ENCODE measurements at regions of chr3 and their contacts with region 1.

Region 1: GRCh38 chr3:49802719-49803464 is at the start of gene INKA1:
- DNase-seq: peak; percentile 87
- H3K4me3 ChIP-seq: peak within 1 kb of the TSS; percentile 68 to 86 (median 76)
- H3K27ac ChIP-seq: peak within 1 kb of the TSS; percentile 56
- H3K4me1 ChIP-seq: peaks cover 39% of the 10 kb centered on the region
- H3K27me3 ChIP-seq: no peaks in the 10 kb centered on the region
- CTCF ChIP-seq: peak; percentile 86 to 95
- POLR2A ChIP-seq: peak; percentile 51
- total RNA-seq, gene INKA1: 24.0 and 26.5 TPM in 2 replicates

Region 2: DNA sequence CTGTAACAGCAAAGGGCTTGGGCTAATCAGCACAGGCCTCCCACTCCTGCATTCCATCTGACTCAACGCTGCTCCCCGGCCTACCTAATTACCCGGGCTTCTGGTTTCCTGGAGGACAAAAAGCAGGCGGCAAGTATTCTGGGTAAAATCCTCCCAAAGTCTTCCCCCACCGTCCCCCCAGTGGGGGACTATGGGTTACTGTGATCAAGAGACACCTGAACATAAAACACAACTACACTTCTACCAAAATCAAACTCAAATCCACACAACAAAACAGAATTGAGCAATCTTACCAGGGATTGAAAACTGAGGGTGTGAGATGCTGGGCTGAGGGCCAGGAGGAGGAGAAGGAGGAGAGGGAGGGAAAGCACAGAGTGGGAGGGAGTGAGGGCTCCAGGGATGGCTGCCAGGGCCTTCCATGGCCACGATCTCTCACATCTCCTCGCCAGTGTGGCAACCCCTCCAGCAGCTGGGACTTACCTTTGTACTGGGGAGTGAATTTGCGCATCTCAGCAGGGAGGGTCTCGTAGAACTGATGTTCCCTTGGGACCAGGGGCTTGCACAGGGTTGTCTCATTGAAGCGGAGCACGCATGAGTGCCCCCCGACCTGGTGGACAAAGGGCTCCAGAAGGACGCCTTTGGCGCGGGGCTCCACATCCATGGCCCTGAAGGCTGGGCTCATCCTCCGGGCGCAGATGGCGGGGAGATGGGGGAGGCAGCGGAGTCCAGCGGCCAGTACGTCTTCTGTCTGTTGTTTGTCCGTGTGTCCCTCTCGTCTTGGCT is 1108.1 kb before region 1 on chr3:
- CTCF ChIA-PET with region 1: no interaction called
- POLR2A ChIA-PET with region 1: no interaction called
- dilution Hi-C with region 1: no loop called
- intact Hi-C with region 1: no loop called
- DNase-seq: peak; percentile 60
- H3K4me3 ChIP-seq: peak overlapping the region in 1 of 3 experiments; percentile 17
- H3K27ac ChIP-seq: peak overlapping the region; percentile 85
- H3K4me1 ChIP-seq: peaks cover 21% of the 10 kb centered on the region
- H3K27me3 ChIP-seq: no peaks in the 10 kb centered on the region
- CTCF ChIP-seq: no peak
- POLR2A ChIP-seq: no peak

Region 3: DNA sequence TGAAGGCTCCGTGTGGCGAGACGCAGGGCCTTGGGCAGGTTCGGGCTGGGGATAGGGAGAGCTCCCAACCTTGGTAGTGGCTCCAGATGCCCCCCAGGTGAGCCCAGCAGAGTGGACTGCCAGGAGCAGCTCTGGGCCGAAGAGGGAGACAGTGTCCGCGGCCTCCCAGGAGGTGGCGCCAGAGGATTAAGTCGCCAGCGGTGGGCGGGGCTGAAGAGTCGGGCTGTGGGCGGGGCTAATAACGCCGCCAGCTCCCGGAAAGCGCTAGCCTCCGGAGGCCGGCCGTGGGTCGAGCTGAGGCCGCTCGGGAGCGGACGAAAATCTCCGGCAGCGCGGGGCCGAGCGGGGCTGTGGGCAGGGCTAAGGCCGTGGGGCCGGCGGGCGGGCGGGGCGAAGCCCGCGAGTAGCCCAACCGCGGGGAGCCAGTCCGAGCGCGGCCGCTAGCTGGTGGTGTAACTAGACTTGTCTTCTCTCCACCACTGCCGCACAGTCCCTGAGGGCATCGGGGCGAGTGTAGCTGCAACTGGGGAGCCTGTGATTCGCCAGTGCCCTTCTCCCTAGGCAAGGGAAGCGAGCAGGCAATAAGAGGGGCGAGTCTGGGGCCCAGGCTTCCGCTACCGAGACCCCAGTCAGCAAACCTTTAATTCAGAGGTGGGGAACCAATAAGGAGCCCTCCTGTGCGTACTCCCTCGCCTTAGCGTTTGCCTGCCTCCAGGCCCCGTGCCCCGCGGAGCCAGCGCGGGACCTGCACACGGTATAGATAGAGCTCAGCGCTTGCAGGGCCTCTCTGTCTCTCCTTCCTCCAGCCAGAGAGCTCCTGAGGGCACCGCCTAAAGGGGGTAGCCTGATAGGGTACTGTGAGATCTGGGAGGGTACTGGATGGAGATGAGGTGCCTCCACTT is 263.0 kb before region 1 on chr3:
- CTCF ChIA-PET with region 1: interaction called, 11 read pairs
- POLR2A ChIA-PET with region 1: no interaction called
- dilution Hi-C with region 1: no loop called
- intact Hi-C with region 1: no loop called
- DNase-seq: peak; percentile 96
- H3K4me3 ChIP-seq: peak overlapping the region; percentile 3 to 33 (median 6)
- H3K27ac ChIP-seq: no peak overlapping the region
- H3K4me1 ChIP-seq: peaks cover 7% of the 10 kb centered on the region
- H3K27me3 ChIP-seq: peaks cover 2 to 5% of the 10 kb centered on the region in 2 experiments
- CTCF ChIP-seq: peak; percentile 81 to 92
- POLR2A ChIP-seq: peak; percentile 42

Region 4: GRCh38 chr3:49712631-49713319 is 90.1 kb before region 1 on chr3:
- CTCF ChIA-PET with region 1: no interaction called
- POLR2A ChIA-PET with region 1: no interaction called
- dilution Hi-C with region 1: no loop called
- intact Hi-C with region 1: no loop called
- DNase-seq: no peak
- H3K4me3 ChIP-seq: no peak overlapping the region
- H3K27ac ChIP-seq: no peak overlapping the region
- H3K4me1 ChIP-seq: no peaks in the 10 kb centered on the region
- H3K27me3 ChIP-seq: no peaks in the 10 kb centered on the region
- CTCF ChIP-seq: no peak
- POLR2A ChIP-seq: no peak

Region 5: GRCh38 chr3:49723628-49724551 is 79.0 kb before region 1 on chr3 and contains the start of gene GMPPB:
- CTCF ChIA-PET with region 1: interaction called, 6 read pairs
- POLR2A ChIA-PET with region 1: no interaction called
- dilution Hi-C with region 1: no loop called
- intact Hi-C with region 1: loop called (anchors 2 kb)
- DNase-seq: peak; percentile 98
- H3K4me3 ChIP-seq: peak within 1 kb of the TSS; percentile 59 to 85 (median 81)
- H3K27ac ChIP-seq: peak within 1 kb of the TSS; percentile 84
- H3K4me1 ChIP-seq: peaks cover 16% of the 10 kb centered on the region
- H3K27me3 ChIP-seq: no peaks in the 10 kb centered on the region
- CTCF ChIP-seq: no peak
- POLR2A ChIP-seq: peak; percentile 80
- total RNA-seq, gene GMPPB: 52.5 and 54.5 TPM in 2 replicates

Region 6: DNA sequence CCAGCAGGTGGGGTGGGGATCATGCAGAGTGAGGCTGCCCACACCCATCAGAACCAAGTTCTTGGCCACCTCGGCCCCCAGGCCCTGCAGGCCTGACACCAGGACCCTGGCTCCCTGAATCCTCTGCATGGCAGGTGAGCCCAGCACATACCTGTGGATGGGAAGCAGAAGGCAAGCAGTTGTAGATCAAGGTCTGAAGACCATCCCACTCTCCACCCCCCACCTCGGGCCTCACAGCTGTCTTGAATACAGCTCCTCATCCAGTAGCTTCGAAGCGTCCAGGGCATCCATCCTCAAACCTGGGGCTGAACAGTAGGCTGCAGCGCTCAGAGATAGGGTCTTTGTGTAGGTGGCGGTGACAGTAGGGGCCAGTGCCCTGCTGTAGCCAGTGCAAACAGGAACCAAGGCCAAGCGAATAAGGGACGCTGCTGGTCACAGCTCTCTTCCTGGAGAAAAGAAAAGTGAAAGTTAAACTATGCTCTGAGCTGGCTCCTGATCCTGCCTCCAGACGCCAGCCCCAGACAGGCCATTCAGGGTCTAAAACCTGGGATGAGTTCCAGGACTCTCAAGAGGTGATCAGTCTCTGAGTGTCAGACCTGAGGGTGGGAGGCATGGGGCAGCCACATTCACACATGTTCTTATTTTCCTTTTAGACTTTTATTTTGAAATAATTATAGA is 10.7 kb after region 1 on chr3 and contains the start of gene UBA7:
- CTCF ChIA-PET with region 1: interaction called, 24 read pairs
- POLR2A ChIA-PET with region 1: interaction called, 7 read pairs
- dilution Hi-C with region 1: no loop called
- intact Hi-C with region 1: loop called (anchors 1 kb)
- DNase-seq: peak; percentile 78
- H3K4me3 ChIP-seq: peak within 1 kb of the TSS; percentile 8 to 48 (median 17)
- H3K27ac ChIP-seq: peak within 1 kb of the TSS; percentile 44
- H3K4me1 ChIP-seq: peaks cover 13% of the 10 kb centered on the region
- H3K27me3 ChIP-seq: no peaks in the 10 kb centered on the region
- CTCF ChIP-seq: no peak
- POLR2A ChIP-seq: no peak
- total RNA-seq, gene UBA7: 41.9 and 57.4 TPM in 2 replicates

Region 7: DNA sequence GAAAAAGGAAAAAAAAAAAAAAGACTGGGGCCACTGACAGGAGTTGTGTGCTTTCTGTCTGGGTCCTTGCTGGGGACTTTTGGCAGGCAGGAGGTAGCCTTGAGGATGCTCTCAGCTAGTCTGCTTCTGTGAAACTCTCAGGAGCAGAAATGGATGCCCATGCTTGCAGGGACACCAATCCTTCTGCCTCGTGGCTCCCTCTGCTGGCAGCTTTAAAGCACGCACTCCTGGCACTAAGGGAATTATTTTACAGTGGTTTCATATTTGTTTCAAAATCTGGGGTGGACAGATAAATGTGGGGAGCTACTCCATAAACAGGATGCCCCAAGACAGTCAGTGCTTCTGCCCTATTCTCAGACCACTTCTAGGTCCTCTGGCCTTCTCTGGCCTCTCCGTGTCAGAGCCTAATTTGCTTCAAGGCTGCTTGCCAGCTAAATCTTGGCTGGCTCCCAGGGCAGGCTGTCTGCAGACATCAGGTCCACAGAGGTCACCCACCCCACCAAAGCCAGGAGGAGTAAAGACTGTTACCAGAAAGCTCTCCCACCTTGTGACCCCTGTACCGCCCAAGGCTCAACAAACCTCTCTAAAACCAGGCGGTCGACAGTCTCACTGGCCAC is 36.4 kb after region 1 on chr3:
- CTCF ChIA-PET with region 1: interaction called, 545 read pairs
- POLR2A ChIA-PET with region 1: interaction called, 15 read pairs
- dilution Hi-C with region 1: no loop called
- intact Hi-C with region 1: loop called (anchors 1 kb)
- DNase-seq: peak; percentile 82
- H3K4me3 ChIP-seq: no peak overlapping the region
- H3K27ac ChIP-seq: no peak overlapping the region
- H3K4me1 ChIP-seq: peaks cover 15% of the 10 kb centered on the region
- H3K27me3 ChIP-seq: no peaks in the 10 kb centered on the region
- CTCF ChIP-seq: peak; percentile 82 to 93
- POLR2A ChIP-seq: no peak

Region 8: DNA sequence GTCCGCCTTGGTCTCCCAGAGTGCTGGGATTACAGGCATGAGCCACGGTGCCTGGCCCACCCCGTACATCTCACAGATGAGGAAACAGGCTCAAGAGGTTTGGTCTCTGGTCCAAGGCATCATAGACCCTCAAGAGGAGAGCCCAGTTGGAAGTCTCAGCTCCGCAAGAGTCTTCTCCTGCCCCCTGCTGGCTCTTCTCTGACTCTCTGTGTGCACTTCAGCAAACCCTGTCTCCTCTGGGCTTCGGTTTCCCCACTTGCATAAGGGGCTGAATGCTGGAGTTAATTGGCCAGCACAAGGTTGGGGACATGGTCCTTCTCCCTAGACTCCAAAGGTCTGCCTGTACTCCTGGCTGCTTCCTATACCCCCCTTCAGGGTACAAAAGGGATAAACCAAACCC is 96.9 kb after region 1 on chr3:
- CTCF ChIA-PET with region 1: interaction called, 27 read pairs
- POLR2A ChIA-PET with region 1: no interaction called
- dilution Hi-C with region 1: no loop called
- intact Hi-C with region 1: loop called (anchors 1 kb)
- DNase-seq: peak; percentile 24
- H3K4me3 ChIP-seq: no peak overlapping the region
- H3K27ac ChIP-seq: no peak overlapping the region
- H3K4me1 ChIP-seq: peaks cover 6% of the 10 kb centered on the region
- H3K27me3 ChIP-seq: no peaks in the 10 kb centered on the region
- CTCF ChIP-seq: peak; percentile 37 to 59
- POLR2A ChIP-seq: no peak

Region 9: DNA sequence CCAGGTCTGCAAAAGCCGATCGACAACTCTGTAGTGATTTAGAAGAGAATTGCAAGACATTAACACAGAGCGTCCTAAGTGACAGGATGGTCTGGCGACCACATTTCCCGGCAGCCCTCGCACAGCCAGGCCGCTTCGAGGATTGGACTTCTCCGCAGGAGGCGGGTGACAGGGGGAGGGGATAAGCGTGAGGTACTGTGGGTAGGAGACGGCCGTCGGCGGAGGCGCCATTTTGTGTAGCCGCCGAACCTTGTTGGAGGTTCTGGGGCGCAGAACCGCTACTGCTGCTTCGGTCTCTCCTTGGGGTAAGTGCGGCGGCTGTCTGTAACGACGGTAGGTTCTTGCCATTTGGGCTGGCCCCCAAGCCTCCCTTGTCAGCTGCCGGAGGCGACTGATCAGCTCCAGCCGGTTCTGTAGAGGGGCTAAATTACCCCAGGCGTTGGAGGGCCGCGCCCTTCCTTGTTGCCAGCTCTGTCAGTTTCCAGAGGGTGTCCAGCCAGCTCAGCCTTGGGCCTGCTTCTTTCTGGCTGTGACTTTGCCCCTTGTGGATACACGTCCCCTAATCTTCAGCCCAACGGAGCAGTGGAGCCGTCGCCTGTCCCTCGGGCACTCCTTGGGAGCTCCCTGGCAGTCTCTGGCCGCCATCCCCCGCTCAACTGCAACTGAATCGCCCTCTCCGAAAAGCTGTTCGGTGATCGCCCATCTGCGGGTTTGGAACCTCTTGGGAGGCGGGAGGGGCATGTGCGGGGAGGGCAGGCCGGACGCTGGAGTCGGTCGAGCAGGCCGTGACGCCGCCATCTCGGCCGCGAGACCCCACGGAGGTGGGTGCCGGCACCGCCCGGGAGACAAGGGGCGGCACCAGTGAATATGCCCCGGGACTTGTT is 286.1 kb after region 1 on chr3 and contains the start of gene RBM5:
- CTCF ChIA-PET with region 1: no interaction called
- POLR2A ChIA-PET with region 1: no interaction called
- dilution Hi-C with region 1: no loop called
- intact Hi-C with region 1: loop called (anchors 5 kb)
- DNase-seq: peak; percentile 92
- H3K4me3 ChIP-seq: peak within 1 kb of the TSS; percentile 62 to 82 (median 82)
- H3K27ac ChIP-seq: peak within 1 kb of the TSS; percentile 90
- H3K4me1 ChIP-seq: peaks cover 14% of the 10 kb centered on the region
- H3K27me3 ChIP-seq: no peaks in the 10 kb centered on the region
- CTCF ChIP-seq: no peak
- POLR2A ChIP-seq: peak; percentile 89
- total RNA-seq, gene RBM5: 188 and 190 TPM in 2 replicates

Measured in endothelial cell of umbilical vein (primary cell).